ENCODE measurements at regions of chr2 and their contacts with region 1.

Region 1: GRCh38 chr2:44975571-44976450 is 33.4 kb downstream of the SIX2 start:
- DNase-seq: peak in 1 of 2 donors; percentile 84
- H3K4me3 ChIP-seq: no peak overlapping the region
- CTCF ChIP-seq: no peak
- POLR2A ChIP-seq: no peak

Region 2: DNA sequence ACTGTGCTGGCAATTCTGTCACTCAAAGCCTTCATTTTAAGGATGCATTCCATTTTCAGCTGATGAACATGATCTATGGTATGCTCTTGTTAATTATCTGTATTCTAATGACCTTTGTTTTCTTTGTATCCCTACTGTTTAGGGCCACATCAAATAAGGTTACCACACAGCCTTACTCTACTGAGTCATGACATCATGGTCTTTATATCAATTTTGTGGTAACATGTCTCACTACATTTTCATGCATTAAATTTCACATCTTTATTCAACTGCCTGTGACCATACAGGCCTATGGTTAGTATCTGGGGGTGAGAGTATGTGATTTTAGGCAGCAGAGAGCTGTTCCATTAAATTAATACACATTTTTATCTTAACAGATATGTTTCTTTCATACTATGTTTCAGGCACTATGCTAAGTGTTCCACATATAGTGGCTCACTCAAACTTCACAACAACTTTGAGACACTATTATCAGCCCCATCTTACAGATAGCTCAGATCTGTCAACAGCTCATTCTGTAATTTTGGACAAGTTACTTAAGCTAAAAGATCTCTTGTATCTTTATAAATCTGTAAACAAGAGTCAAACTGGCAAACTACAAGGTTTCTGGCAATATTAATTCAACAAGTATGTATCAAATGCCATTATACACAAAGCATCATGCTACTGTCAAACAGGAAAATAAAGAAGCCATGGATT is 998.0 kb before region 1 on chr2:
- intact Hi-C with region 1: no loop called
- DNase-seq: no peak
- H3K4me3 ChIP-seq: no peak overlapping the region
- CTCF ChIP-seq: no peak
- POLR2A ChIP-seq: no peak

Region 3: GRCh38 chr2:45497355-45497754 is 521.5 kb after region 1 on chr2:
- intact Hi-C with region 1: loop called (anchors 5 kb)
- DNase-seq: no peak
- H3K4me3 ChIP-seq: no peak overlapping the region
- CTCF ChIP-seq: no peak
- POLR2A ChIP-seq: no peak

Measured in lower leg skin (tissue), 4 donors.